GM12878 (cell line): ENCODE measurements at regions of chr13 and their contacts with region 1.

Region 1: DNA sequence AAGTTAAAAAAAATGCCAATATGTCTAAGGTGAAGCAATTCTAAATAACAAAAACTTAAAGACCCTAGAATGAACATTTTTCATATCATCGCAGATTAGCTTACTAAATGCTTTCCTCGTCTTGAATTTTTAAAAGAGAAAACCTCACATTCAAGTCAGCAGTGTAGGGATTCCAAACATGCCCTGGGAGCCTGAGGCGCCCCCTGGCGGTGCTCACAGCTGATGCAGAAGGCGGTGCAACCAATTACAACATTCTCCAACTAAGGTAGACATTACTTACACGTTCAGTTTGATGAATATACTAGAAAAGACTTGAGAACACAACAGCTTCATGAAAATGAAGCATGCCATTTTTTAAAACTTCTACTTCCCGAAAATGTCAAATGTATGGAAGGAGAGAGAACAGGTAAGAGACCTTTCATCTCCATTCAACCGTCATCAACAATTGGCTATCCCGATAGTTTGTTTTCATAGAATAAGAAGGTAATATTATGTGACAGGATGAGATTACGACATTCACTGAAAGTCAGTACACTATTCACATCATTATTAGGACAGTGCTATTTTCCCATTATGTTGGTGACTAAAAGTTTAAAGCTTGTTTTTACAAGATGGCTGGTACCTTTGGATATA is 304.4 kb downstream of the DCLK1 start:
- DNase-seq: no peak
- ATAC-seq: no peak
- H3K4me3 ChIP-seq: no peak overlapping the region
- H3K27ac ChIP-seq: no peak overlapping the region
- H3K4me1 ChIP-seq: no peaks in the 10 kb centered on the region
- H3K27me3 ChIP-seq: no peaks in the 10 kb centered on the region
- CTCF ChIP-seq: peak; percentile 21 to 31 (median 29); a peak in 3 of 6 replicates
- EP300 ChIP-seq: no peak
- POLR2A ChIP-seq: no peak
- RAD21 ChIP-seq: no peak

Region 2: DNA sequence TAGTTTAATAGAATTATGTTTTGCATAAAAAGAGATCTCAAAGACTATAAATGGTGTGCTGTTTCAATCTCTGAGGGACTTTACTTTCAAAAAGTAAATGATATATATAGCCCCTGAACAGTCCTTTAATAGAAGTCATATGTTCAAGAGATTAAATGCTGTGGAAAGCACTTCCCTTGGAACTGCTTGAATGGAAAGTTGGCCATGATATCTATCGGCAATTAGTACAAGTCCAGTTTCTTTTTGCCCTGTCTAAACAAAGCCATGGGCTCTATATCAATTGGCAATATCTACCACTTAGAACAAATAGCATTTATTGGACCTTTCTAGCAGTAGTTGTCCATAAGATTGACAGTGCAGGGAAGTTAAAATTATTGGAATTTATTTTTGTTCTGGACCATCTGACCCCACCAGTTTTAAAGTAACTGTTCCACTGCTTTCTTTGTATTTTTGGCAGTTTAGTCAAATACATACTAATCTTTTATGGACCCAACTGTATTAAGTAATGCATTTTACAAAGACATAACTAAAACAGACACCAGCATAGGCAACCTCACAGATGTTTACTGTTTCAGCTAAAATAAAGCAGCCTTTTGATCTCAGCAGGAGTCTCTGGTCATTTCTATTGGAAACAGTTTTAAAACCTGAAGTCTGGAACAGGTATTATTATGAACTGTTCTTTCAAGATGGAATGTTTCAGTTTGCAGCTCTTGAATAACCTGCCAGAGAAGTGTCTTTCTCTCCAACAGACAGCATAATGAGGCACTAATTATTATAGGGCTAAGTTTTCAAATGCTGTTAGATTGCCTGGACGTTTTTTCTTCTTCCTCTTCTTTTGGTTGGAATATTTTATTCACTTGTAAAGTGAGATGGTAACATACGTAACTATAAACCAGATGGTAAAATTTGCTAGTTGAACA is 21.9 kb after region 1 on chr13:
- CTCF ChIA-PET with region 1: interaction called, 4 read pairs
- POLR2A ChIA-PET with region 1: no interaction called
- RAD21 ChIA-PET with region 1: no interaction called
- SMC1A ChIA-PET with region 1: no interaction called
- in situ Hi-C with region 1: no loop called
- intact Hi-C with region 1: loop called (anchors 2 kb)
- DNase-seq: no peak
- ATAC-seq: no peak
- H3K4me3 ChIP-seq: no peak overlapping the region
- H3K27ac ChIP-seq: no peak overlapping the region
- H3K4me1 ChIP-seq: no peaks in the 10 kb centered on the region
- H3K27me3 ChIP-seq: no peaks in the 10 kb centered on the region
- CTCF ChIP-seq: no peak
- EP300 ChIP-seq: no peak
- POLR2A ChIP-seq: no peak
- RAD21 ChIP-seq: no peak